Gastrocnemius medialis (tissue), 4 donors: ENCODE measurements at regions of chr1 and their contacts with region 1.

Region 1: GRCh38 chr1:85707990-85708828 is at the start of gene ZNHIT6:
- DNase-seq: peak; percentile 81 to 91
- ATAC-seq: peak; percentile 98
- H3K4me3 ChIP-seq: peak within 1 kb of the TSS; percentile 63 to 92 (median 78)
- H3K27ac ChIP-seq: peak within 1 kb of the TSS; percentile 80 to 91 (median 88)
- H3K4me1 ChIP-seq: peaks cover 11 to 19% of the 10 kb centered on the region in 2 donors
- H3K27me3 ChIP-seq: no peaks in the 10 kb centered on the region
- CTCF ChIP-seq: peak; percentile 14 to 43 (median 16)
- POLR2A ChIP-seq: peak in 1 of 2 donors; percentile 9
- total RNA-seq, gene ZNHIT6: 6.6 to 11.4 (median 7.8) TPM

Region 2: DNA sequence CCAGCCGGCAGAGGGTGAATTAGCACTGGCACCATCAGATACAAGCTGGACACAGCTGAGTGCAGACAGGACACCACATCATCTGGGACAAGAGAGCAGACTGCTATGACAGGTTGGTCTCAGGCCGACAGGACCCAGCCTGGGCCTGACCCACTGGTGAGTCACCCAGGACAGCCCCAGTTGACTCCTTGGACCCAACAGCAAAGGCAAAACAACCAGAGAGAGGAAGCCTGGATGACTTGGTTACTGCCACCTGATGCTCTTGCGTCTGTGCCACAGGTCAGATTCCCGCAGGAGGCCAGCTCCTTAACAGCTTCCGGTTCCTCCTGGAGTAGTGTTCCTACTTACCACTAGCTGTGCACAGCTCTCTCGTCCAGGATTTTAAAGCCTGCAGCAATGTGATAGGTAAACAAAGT is 109.1 kb before region 1 on chr1:
- in situ Hi-C with region 1: no loop called
- intact Hi-C with region 1: loop called (anchors 5 kb)
- DNase-seq: peak; percentile 75 to 83
- ATAC-seq: peak; percentile 92 to 95
- H3K4me3 ChIP-seq: no peak overlapping the region
- H3K27ac ChIP-seq: peak overlapping the region; percentile 70 to 80 (median 78)
- H3K4me1 ChIP-seq: peaks cover 21% of the 10 kb centered on the region in 2 donors
- H3K27me3 ChIP-seq: no peaks in the 10 kb centered on the region
- CTCF ChIP-seq: peak in 1 of 5 experiments; percentile 18
- POLR2A ChIP-seq: no peak

Region 3: GRCh38 chr1:85671166-85671565 is 37.0 kb before region 1 on chr1:
- in situ Hi-C with region 1: no loop called
- intact Hi-C with region 1: no loop called
- DNase-seq: no peak
- ATAC-seq: no peak
- H3K4me3 ChIP-seq: no peak overlapping the region
- H3K27ac ChIP-seq: no peak overlapping the region
- H3K4me1 ChIP-seq: no peaks in the 10 kb centered on the region
- H3K27me3 ChIP-seq: no peaks in the 10 kb centered on the region
- CTCF ChIP-seq: no peak
- POLR2A ChIP-seq: no peak

Region 4: DNA sequence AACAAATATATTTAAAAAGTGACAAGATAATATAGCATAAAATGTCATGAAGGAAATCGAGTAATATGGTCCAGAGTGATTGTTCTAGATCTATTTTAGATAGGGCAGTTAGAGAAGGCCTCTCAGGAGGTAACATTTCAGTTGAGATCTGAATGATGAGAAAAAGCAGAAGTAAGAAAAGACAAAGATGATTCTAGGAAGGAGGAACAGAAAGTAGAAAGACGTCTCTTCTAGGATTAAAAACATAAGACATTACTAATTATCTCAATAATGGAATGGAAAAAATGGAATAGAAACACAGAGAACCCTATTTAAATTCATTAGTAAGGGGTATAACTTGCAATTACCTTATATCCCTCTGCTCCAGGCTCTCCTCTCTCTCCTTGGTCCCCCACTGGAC is 130.0 kb after region 1 on chr1:
- in situ Hi-C with region 1: no loop called
- intact Hi-C with region 1: no loop called
- DNase-seq: no peak
- ATAC-seq: no peak
- H3K4me3 ChIP-seq: no peak overlapping the region
- H3K27ac ChIP-seq: no peak overlapping the region
- H3K4me1 ChIP-seq: no peaks in the 10 kb centered on the region
- H3K27me3 ChIP-seq: no peaks in the 10 kb centered on the region
- CTCF ChIP-seq: no peak
- POLR2A ChIP-seq: no peak

Region 5: DNA sequence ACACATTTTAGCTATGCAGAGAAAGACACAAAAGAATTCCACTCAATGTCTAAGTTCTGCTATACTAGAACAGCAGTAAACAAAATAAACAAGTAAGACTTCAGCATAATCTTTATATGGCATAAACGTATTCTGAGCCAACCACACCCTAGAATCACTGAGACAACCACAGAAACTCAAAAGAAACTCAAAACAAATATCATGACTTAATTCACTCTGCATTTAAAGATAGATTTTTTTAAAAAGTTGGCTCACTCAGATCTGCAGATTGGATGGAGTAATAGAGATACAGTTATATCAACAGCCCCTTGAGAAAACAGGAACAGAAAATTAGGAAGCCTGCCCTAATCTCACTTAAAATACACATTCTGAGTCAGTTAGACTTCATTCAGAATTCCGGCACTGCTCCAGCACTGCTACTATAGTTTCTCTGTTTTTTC is 353.4 kb after region 1 on chr1:
- in situ Hi-C with region 1: no loop called
- intact Hi-C with region 1: no loop called
- DNase-seq: no peak
- ATAC-seq: no peak
- H3K4me3 ChIP-seq: no peak overlapping the region
- H3K27ac ChIP-seq: no peak overlapping the region
- H3K4me1 ChIP-seq: peaks cover 5 to 6% of the 10 kb centered on the region in 2 donors
- H3K27me3 ChIP-seq: no peaks in the 10 kb centered on the region
- CTCF ChIP-seq: no peak
- POLR2A ChIP-seq: no peak